Pancreas (tissue), 10 donors: ENCODE measurements at regions of chr9 and their contacts with region 1.

Region 1: GRCh38 chr9:26579056-26579455 is 313.5 kb downstream of the CAAP1 start:
- DNase-seq: no peak
- ATAC-seq: no peak
- H3K4me3 ChIP-seq: no peak overlapping the region
- H3K27ac ChIP-seq: no peak overlapping the region
- H3K4me1 ChIP-seq: no peaks in the 10 kb centered on the region
- H3K27me3 ChIP-seq: no peaks in the 10 kb centered on the region
- CTCF ChIP-seq: no peak

Region 2: GRCh38 chr9:26391036-26391435 is 188.0 kb before region 1 on chr9:
- intact Hi-C with region 1: no loop called
- DNase-seq: no peak
- ATAC-seq: no peak
- H3K4me3 ChIP-seq: no peak overlapping the region
- H3K27ac ChIP-seq: no peak overlapping the region
- H3K4me1 ChIP-seq: no peaks in the 10 kb centered on the region
- H3K27me3 ChIP-seq: no peaks in the 10 kb centered on the region
- CTCF ChIP-seq: no peak

Region 3: DNA sequence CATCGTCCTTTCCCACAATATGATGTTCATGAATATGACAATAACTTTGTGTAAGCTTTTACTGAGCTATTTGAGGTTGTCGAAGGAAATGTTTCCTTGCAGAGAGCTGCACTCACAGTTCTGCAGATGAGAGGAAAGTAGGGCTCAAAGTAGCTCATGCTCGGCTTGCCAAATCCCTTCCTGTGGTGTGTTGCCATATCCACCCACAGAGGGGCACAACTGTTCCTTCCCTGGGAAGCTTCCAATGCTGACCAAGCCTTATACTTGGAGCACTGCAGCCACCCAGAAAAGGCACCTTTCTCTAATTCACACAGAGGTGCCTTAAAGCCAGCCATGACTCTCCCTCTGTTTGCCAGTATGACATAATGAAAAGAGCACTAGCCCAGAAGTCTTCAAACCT is 76.7 kb before region 1 on chr9:
- intact Hi-C with region 1: loop called in 1 of 3 experiments (anchors 10 kb)
- DNase-seq: no peak
- ATAC-seq: no peak
- H3K4me3 ChIP-seq: no peak overlapping the region
- H3K27ac ChIP-seq: no peak overlapping the region
- H3K4me1 ChIP-seq: no peaks in the 10 kb centered on the region
- H3K27me3 ChIP-seq: no peaks in the 10 kb centered on the region
- CTCF ChIP-seq: no peak